ENCODE measurements at regions of chr17 and their contacts with region 1.

Region 1: GRCh38 chr17:76997981-76998531 is 129.9 kb downstream of the MGAT5B start:
- DNase-seq: peak; percentile 92
- H3K4me3 Mint-ChIP-seq: peak overlapping the region; percentile 62
- H3K27ac Mint-ChIP-seq: peak overlapping the region; percentile 92
- H3K4me1 Mint-ChIP-seq: peaks cover 50% of the 10 kb centered on the region
- H3K27me3 Mint-ChIP-seq: no peaks in the 10 kb centered on the region

Region 2: GRCh38 chr17:76726231-76726775 is 271.8 kb before region 1 on chr17 and contains the start of gene JMJD6:
- intact Hi-C with region 1: loop called (anchors 5 kb)
- DNase-seq: peak; percentile 98
- H3K4me3 Mint-ChIP-seq: peak within 1 kb of the TSS; percentile 96
- H3K27ac Mint-ChIP-seq: peak within 1 kb of the TSS; percentile 97
- H3K4me1 Mint-ChIP-seq: peaks cover 39% of the 10 kb centered on the region
- H3K27me3 Mint-ChIP-seq: no peaks in the 10 kb centered on the region
- total RNA-seq, gene JMJD6: 82.5 and 86.3 TPM in 2 replicates

Region 3: DNA sequence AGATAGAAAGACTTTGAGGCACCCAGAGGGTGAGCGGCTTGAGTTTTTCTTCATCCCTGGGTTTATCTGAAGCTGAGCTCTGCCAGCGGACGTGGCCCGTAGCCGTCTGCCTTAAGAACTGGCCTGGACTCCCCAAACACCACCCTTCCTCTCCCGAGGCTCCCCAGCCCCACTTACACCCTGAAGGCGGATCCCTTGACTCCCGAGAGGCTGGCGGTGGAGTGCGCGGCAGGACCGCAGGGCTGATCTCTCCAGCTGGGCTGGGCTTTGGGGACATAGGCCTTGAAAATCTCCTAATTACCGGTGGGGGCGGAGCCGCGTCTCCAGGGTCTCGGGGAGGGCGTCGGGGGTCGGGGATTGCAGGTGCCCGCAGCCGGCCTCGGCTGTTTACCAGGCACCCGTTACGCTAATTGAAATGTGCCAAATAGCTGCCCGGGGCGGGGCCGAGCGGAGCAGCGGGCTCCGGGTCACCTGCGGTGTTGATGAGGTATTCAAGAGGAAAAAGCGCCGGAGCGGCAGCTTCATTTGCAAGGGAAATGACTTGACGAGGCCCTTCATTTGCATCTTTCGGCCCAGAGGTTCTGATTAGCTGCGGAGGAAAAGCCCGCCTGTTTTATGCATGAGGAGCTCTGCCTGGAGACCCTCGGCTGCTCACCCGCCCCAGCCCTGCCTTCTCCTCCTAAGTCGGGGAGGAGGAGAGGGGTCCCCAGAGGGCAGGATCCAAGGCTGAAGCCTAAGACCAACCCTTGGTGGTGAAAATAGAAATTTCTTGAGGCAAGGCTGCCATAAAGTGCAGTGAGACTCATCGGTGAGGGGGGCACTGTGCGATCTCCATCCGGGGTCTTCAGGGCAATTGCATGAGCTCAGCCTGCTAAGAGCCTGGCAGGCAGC is 29.1 kb before region 1 on chr17:
- intact Hi-C with region 1: loop called (anchors 1 kb)
- DNase-seq: peak; percentile 87
- H3K4me3 Mint-ChIP-seq: peak overlapping the region; percentile 74
- H3K27ac Mint-ChIP-seq: peak overlapping the region; percentile 25
- H3K4me1 Mint-ChIP-seq: peaks cover 11% of the 10 kb centered on the region
- H3K27me3 Mint-ChIP-seq: peaks cover 39% of the 10 kb centered on the region

Region 4: GRCh38 chr17:76982408-76983074 is 15.5 kb before region 1 on chr17:
- intact Hi-C with region 1: loop called (anchors 1 kb)
- DNase-seq: peak; percentile 83
- H3K4me3 Mint-ChIP-seq: peak overlapping the region; percentile 37
- H3K27ac Mint-ChIP-seq: peak overlapping the region; percentile 58
- H3K4me1 Mint-ChIP-seq: peaks cover 15% of the 10 kb centered on the region
- H3K27me3 Mint-ChIP-seq: no peaks in the 10 kb centered on the region

Region 5: DNA sequence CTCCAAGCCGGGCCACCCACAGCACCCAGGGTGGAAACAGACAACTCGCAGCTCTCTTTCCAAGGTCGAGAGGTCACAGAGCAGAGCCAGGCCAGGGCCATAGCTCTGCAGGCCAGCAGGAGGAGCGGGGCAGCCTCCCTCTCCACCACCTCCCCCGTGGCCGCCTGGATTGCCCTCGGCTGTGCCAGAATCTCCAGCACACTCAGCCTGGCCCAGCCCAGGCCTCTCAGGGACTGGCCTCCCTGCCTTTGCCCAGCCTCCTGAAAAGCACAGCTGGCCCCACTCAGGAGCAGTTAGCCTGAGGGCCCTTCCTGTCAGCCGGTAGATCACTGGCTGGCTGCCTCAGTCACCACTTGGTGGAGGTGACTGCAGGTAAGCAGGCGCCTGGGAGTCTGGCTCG is 56.9 kb after region 1 on chr17:
- intact Hi-C with region 1: no loop called
- DNase-seq: no peak
- H3K4me3 Mint-ChIP-seq: no peak overlapping the region
- H3K27ac Mint-ChIP-seq: no peak overlapping the region
- H3K4me1 Mint-ChIP-seq: no peaks in the 10 kb centered on the region
- H3K27me3 Mint-ChIP-seq: peaks cover 12% of the 10 kb centered on the region